ENCODE measurements at regions of chr1 and their contacts with region 1.

Region 1: DNA sequence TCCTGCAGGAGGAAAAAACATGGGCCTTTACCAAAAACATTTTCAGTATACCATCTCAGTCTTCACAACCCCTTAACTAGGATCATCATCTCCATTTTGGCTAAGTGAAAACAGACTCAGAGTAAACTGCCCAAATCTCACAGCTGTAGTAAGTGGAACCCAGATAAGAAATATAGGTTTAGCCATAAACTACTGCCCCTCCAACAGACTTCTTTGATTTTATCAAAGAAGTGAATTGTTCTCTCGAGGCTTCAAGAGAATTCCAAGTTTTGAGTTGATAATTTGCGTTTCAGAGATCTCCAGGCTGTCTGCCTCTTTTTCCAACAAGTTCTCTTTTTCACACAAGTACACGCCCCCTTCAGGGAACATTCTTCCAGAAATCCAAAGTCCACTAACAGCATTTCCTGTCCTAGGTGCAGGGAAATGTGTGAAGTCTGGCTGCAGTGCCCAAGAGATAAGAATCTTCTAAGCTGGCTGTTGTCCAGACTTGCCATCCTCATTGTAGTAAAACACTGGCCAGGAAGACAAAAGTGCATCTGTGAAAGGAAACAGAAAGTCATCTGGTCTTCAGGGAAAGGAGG is 30.8 kb downstream of the RNF19B start:
- DNase-seq: no peak
- H3K4me3 ChIP-seq: no peak overlapping the region
- H3K4me3 Mint-ChIP-seq: peak overlapping the region in 1 of 7 donors; percentile 56
- H3K27ac ChIP-seq: no peak overlapping the region
- H3K27ac Mint-ChIP-seq: peak overlapping the region in 5 of 8 donors; percentile 24 to 57 (median 37)
- H3K4me1 ChIP-seq: no peaks in the 10 kb centered on the region
- H3K4me1 Mint-ChIP-seq: peaks cover 0 to 4% (median 0%) of the 10 kb centered on the region in 3 donors
- H3K27me3 ChIP-seq: no peaks in the 10 kb centered on the region
- H3K27me3 Mint-ChIP-seq: no peaks in the 10 kb centered on the region

Region 2: DNA sequence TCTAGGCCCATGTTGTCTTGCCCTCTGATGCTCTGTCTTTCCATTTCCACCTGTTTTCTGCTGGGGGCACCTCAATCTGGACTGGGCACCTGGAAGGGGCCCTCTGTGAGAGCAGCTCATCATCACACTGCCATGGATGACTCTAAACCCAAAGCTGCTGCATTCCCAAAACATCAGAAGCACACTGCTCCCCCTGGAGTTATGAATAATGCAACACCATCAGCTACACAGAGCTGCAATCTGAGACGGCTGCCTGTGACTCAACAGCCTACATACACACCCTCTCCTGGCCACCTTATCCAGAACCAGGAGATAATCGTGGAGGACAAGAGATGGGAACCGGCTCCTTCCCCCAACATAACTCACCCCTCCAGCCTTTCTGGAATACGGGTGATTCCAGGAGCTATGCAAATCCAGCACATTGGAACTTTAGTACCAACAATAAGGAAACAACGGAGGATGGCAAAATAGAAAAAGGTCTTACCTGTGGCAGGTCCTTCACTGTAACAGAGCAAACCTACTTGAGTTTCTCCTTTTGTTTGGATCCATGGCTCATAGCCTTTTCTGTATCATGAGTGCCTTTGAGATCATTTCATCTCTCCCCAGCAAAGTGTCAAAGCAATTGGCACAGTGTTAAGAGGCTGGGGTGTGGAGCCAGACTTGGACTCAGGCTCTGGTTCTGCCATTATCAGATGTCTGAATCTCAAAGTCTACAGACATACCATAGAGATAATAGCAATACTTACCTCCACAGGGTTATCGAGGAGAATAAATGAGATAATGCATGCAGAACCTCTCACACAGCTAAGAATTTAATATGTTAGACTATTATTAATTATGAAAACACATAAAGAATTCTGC is 73.6 kb after region 1 on chr1:
- CTCF ChIA-PET with region 1: interaction called, 16 read pairs
- POLR2A ChIA-PET with region 1: no interaction called
- DNase-seq: no peak
- H3K4me3 ChIP-seq: no peak overlapping the region
- H3K4me3 Mint-ChIP-seq: no peak overlapping the region
- H3K27ac ChIP-seq: no peak overlapping the region
- H3K27ac Mint-ChIP-seq: peak overlapping the region in 2 of 8 donors; percentile 60 to 62
- H3K4me1 ChIP-seq: no peaks in the 10 kb centered on the region
- H3K4me1 Mint-ChIP-seq: no peaks in the 10 kb centered on the region
- H3K27me3 ChIP-seq: no peaks in the 10 kb centered on the region
- H3K27me3 Mint-ChIP-seq: no peaks in the 10 kb centered on the region

Region 3: DNA sequence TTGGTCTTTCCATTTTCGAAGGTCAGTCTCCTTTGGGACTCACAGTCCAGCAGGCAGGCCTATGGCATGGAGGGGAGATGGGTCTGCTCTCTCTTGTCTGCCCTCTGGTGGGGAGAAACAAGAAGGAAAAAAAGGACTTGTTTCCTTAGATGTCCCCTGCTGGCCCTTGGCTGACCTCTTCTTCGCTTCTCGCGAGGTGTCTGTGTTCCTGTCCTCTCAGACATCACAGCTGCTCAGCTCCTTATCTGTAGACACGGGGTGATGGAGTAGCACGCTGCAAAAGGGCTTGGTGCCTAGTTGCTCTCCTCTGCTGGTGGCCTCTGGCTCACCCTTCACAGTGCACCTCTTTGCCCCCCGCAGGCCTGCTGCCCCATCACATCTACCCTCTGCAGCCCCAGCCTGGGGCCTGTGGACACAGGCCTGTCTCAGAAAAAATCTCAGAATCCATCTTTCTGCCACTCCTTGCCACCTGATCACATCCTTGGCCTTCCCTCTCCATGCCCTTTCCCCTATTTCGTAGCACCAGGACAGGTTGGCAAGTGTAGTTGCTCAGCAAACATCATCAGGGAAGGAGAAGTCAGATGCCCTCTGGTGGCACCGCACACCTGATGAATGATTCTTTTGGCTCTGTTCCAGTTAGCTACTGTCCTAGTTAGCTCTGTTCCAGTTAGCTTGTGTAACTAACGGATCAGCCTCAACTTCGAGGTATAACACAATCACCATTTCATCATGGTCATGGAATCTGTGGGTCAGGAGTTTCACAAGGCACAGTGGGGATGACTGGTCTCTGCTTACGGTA is 121.6 kb after region 1 on chr1:
- CTCF ChIA-PET with region 1: interaction called, 12 read pairs
- POLR2A ChIA-PET with region 1: interaction called, 3 read pairs
- DNase-seq: peak in 2 of 5 donors; percentile 11 to 31
- H3K4me3 ChIP-seq: no peak overlapping the region
- H3K4me3 Mint-ChIP-seq: no peak overlapping the region
- H3K27ac ChIP-seq: no peak overlapping the region
- H3K27ac Mint-ChIP-seq: peak overlapping the region in 2 of 8 donors; percentile 14 to 68
- H3K4me1 ChIP-seq: no peaks in the 10 kb centered on the region
- H3K4me1 Mint-ChIP-seq: peaks cover 0 to 7% (median 7%) of the 10 kb centered on the region in 3 donors
- H3K27me3 ChIP-seq: no peaks in the 10 kb centered on the region
- H3K27me3 Mint-ChIP-seq: peaks cover 0 to 14% of the 10 kb centered on the region in 2 donors